Esophagus muscularis mucosa (tissue), 4 donors: ENCODE measurements at regions of chr4 and their contacts with region 1.

Region 1: DNA sequence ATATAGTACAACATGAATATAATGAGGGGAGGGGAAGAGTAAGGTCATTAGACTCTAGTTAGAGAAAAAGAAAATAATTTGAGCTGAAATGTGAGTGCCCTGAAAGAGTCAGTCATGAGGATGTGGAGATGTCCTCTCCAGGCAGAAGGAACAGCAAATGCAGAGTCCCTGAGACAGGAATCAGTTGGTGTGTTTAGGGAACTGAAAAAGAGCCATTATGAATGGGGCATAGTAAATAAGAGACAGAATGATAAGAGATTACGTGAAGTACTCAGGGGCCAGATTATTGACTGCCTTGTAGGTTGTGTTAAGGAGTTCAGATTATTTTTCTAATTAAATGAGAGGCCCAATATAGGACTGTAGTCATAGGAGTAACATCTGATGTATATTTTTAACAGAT is 147.0 kb downstream of the PDLIM5 start:
- DNase-seq: no peak
- H3K4me3 ChIP-seq: no peak overlapping the region
- H3K27ac ChIP-seq: no peak overlapping the region
- H3K4me1 ChIP-seq: peaks cover 4 to 14% (median 8%) of the 10 kb centered on the region in 4 donors
- H3K27me3 ChIP-seq: no peaks in the 10 kb centered on the region
- CTCF ChIP-seq: no peak
- EP300 ChIP-seq: no peak
- POLR2A ChIP-seq: no peak

Region 2: GRCh38 chr4:94406668-94407437 is 191.9 kb before region 1 on chr4:
- intact Hi-C with region 1: loop called (anchors 2 kb)
- DNase-seq: no peak
- H3K4me3 ChIP-seq: no peak overlapping the region
- H3K27ac ChIP-seq: peak overlapping the region; percentile 4 to 43 (median 14)
- H3K4me1 ChIP-seq: peaks cover 10 to 44% (median 30%) of the 10 kb centered on the region in 4 donors
- H3K27me3 ChIP-seq: no peaks in the 10 kb centered on the region
- CTCF ChIP-seq: peak; percentile 65 to 92 (median 89)
- EP300 ChIP-seq: no peak
- POLR2A ChIP-seq: no peak